Mammary epithelial cell (primary cell): ENCODE measurements at regions of chr2 and their contacts with region 1.

Region 1: GRCh38 chr2:232635820-232636219 is 2.4 kb downstream of the EFHD1 start:
- DNase-seq: no peak
- H3K4me3 ChIP-seq: no peak overlapping the region
- H3K27ac ChIP-seq: no peak overlapping the region
- H3K4me1 ChIP-seq: peaks cover 24% of the 10 kb centered on the region
- H3K27me3 ChIP-seq: peaks cover 17% of the 10 kb centered on the region
- CTCF ChIP-seq: no peak

Region 2: DNA sequence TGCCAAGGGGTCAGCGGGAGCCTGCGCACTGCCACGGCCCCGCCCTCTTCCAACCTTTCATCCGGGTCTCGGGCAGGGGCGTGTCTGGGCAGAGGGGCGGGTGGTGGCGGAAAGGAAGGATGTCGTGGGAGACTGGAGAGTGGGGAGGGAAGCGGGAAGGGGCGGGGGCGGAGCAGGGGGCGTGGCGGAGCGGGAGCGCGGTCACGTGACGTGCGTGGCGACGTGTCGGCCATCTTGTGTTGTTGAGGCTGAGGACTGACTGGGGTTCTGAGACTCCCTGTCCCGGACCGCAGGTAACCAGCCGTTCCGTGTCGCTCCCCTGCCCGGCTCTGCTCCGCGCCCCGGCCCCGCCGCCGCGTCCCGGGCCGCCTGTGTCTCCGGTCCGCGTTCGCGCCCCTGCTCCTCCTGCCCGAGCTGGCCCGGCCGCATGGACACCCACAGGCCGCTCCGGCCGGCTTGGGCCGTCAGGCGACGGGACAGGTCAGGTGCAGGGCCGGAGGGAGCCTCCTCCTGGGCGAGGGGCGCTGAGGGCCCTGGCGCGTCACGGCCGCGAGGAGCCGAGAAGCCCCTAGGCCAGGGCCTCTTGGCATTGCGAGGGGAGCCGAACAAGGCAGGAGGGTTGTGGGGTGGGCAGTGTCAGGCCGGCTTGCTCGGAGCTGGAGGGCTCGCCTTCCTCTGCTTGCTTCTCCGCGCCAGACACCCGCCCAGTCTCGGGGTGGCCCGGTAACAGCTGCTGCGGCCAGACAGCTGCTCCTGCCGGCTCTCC is 61.5 kb after region 1 on chr2 and contains the start of gene GIGYF2:
- CTCF ChIA-PET with region 1: no interaction called
- dilution Hi-C with region 1: no loop called
- in situ Hi-C with region 1: no loop called
- intact Hi-C with region 1: no loop called
- DNase-seq: peak; percentile 99
- H3K4me3 ChIP-seq: peak within 1 kb of the TSS; percentile 64 to 99 (median 92)
- H3K27ac ChIP-seq: peak within 1 kb of the TSS; percentile 77
- H3K4me1 ChIP-seq: peaks cover 21% of the 10 kb centered on the region
- H3K27me3 ChIP-seq: no peaks in the 10 kb centered on the region
- CTCF ChIP-seq: no peak
- total RNA-seq, gene GIGYF2: 45.3 to 52.2 TPM

Region 3: GRCh38 chr2:233312874-233313273 is 677.1 kb after region 1 on chr2:
- CTCF ChIA-PET with region 1: interaction called, 12 read pairs
- dilution Hi-C with region 1: no loop called
- in situ Hi-C with region 1: no loop called
- intact Hi-C with region 1: no loop called
- DNase-seq: no peak
- H3K4me3 ChIP-seq: no peak overlapping the region
- H3K27ac ChIP-seq: no peak overlapping the region
- H3K4me1 ChIP-seq: no peaks in the 10 kb centered on the region
- H3K27me3 ChIP-seq: no peaks in the 10 kb centered on the region
- CTCF ChIP-seq: no peak